ENCODE measurements at regions of chr3 and their contacts with region 1.

Region 1: DNA sequence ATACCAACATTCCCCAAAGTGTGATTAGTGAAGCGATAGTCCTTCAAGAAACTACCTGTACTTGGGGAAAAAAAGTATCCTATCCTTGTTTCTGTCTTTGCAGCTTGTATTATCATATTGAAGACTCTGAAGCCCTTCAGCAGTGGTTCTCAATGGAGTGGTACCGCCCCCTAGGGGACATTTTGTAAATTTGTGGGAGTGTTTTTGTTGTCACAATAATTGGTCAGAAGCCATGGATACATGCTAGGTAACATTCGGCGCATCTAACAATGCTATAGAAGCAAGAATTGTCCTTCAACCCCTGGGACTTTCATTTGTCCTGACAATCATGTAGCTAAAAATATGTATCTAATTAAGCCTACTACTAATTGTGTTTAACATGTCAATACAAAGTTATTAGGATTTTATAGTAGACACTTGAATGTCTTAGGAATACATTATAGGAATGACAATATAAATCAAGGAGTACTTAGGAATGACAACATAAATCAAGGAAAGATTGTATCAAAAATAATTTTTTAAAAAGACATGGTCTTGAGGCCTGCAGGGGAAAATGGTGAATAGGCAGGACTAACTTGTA is 53.7 kb downstream of the NMD3 start:
- DNase-seq: peak; percentile 54
- ATAC-seq: peak; percentile 80
- H3K4me3 Mint-ChIP-seq: no peak overlapping the region
- H3K27ac Mint-ChIP-seq: no peak overlapping the region
- H3K4me1 Mint-ChIP-seq: peaks cover 35% of the 10 kb centered on the region
- H3K27me3 Mint-ChIP-seq: peaks cover 4% of the 10 kb centered on the region; the same call in 1 of the 2 replicates
- CTCF ChIP-seq: peak; percentile 73

Region 2: GRCh38 chr3:161239703-161240102 is 35.1 kb before region 1 on chr3:
- CTCF ChIA-PET with region 1: no interaction called
- POLR2A ChIA-PET with region 1: no interaction called
- DNase-seq: no peak
- ATAC-seq: no peak
- H3K4me3 Mint-ChIP-seq: no peak overlapping the region
- H3K27ac Mint-ChIP-seq: no peak overlapping the region
- H3K4me1 Mint-ChIP-seq: no peaks in the 10 kb centered on the region
- H3K27me3 Mint-ChIP-seq: no peaks in the 10 kb centered on the region
- CTCF ChIP-seq: no peak

Region 3: DNA sequence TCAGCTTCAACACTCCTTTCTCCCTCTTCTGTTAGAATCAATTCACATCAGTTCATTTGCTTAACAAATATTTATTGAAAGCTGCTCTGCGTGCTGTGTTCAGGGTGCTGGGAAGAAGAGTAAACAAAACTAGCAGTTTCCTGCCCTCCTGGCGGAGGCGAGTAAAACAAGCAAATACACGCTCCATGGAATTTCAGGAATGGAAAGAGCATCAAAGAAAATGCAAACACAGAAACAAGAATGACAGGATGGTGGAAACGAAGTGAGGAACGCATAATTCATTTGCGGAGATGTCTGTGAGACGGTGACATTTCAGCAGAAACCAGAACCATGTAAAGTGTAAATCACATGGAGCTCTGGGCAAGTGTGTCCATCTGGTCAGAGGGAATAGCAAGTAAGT is 146.0 kb after region 1 on chr3:
- CTCF ChIA-PET with region 1: interaction called, 15 read pairs
- POLR2A ChIA-PET with region 1: interaction called, 3 read pairs
- DNase-seq: peak; percentile 30
- ATAC-seq: peak; percentile 89
- H3K4me3 Mint-ChIP-seq: peak overlapping the region; percentile 50
- H3K27ac Mint-ChIP-seq: peak overlapping the region; percentile 94
- H3K4me1 Mint-ChIP-seq: peaks cover 29% of the 10 kb centered on the region
- H3K27me3 Mint-ChIP-seq: no peaks in the 10 kb centered on the region; the same call in none of the 2 replicates
- CTCF ChIP-seq: no peak

Measured in WTC11 (cell line).